SK-N-SH (cell line): ENCODE measurements at regions of chr4 and their contacts with region 1.

Region 1: DNA sequence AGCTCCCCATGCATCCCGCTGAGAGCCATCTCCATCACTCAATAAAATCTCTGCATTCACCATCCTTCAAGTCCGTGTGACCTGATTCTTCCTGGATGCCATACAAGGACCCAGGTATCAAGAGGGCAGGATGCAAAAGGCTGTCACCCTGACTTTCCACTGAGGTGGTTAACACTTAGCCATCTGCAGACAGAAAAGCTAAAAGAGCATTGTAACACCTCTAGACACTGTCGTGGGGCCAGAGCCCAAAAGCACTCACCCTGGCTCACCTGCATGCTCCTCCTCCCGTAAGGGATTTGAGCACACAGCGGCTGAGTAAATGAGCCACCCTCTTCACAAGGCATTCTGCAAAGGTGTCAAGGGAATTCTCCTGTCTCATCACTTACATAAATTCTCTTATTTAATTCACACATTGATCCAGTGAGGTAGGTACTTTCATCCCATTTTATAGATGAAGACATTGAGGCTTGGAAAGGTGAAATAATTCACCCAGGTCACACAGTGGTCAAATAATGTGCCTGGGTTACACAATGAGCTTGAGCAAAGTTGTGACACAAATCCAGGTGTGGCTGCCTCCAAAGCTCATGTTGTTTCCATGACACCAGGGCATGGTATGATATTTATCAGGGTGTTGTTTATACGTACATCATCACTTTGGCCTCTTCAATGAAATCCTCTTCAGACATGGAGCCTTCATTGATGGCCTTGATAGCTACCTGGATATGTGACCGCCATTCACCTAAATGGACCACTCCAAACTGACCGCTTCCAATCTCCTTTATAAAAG is 48.0 kb downstream of the TXK start:
- DNase-seq: no peak
- H3K4me3 ChIP-seq: no peak overlapping the region
- H3K27ac ChIP-seq: no peak overlapping the region
- H3K4me1 ChIP-seq: peaks cover 0 to 7% of the 10 kb centered on the region in 2 experiments; a peak in 1 of 4 replicates
- H3K27me3 ChIP-seq: no peaks in the 10 kb centered on the region
- CTCF ChIP-seq: no peak
- EP300 ChIP-seq: no peak
- RAD21 ChIP-seq: no peak

Region 2: GRCh38 chr4:47668810-47669408 is 417.1 kb before region 1 on chr4:
- CTCF ChIA-PET with region 1: interaction called, 11 read pairs
- POLR2A ChIA-PET with region 1: no interaction called
- DNase-seq: peak; percentile 43
- H3K4me3 ChIP-seq: no peak overlapping the region
- H3K27ac ChIP-seq: no peak overlapping the region
- H3K4me1 ChIP-seq: peaks cover 0 to 2% of the 10 kb centered on the region in 2 experiments; a peak in 1 of 4 replicates
- H3K27me3 ChIP-seq: no peaks in the 10 kb centered on the region
- CTCF ChIP-seq: peak; percentile 88
- EP300 ChIP-seq: no peak
- RAD21 ChIP-seq: peak; percentile 81

Region 3: GRCh38 chr4:48002267-48002666 is 83.7 kb before region 1 on chr4:
- CTCF ChIA-PET with region 1: interaction called, 17 read pairs
- POLR2A ChIA-PET with region 1: no interaction called
- DNase-seq: no peak
- H3K4me3 ChIP-seq: no peak overlapping the region
- H3K27ac ChIP-seq: no peak overlapping the region
- H3K4me1 ChIP-seq: no peaks in the 10 kb centered on the region
- H3K27me3 ChIP-seq: no peaks in the 10 kb centered on the region
- CTCF ChIP-seq: no peak
- EP300 ChIP-seq: no peak
- RAD21 ChIP-seq: no peak

Region 4: DNA sequence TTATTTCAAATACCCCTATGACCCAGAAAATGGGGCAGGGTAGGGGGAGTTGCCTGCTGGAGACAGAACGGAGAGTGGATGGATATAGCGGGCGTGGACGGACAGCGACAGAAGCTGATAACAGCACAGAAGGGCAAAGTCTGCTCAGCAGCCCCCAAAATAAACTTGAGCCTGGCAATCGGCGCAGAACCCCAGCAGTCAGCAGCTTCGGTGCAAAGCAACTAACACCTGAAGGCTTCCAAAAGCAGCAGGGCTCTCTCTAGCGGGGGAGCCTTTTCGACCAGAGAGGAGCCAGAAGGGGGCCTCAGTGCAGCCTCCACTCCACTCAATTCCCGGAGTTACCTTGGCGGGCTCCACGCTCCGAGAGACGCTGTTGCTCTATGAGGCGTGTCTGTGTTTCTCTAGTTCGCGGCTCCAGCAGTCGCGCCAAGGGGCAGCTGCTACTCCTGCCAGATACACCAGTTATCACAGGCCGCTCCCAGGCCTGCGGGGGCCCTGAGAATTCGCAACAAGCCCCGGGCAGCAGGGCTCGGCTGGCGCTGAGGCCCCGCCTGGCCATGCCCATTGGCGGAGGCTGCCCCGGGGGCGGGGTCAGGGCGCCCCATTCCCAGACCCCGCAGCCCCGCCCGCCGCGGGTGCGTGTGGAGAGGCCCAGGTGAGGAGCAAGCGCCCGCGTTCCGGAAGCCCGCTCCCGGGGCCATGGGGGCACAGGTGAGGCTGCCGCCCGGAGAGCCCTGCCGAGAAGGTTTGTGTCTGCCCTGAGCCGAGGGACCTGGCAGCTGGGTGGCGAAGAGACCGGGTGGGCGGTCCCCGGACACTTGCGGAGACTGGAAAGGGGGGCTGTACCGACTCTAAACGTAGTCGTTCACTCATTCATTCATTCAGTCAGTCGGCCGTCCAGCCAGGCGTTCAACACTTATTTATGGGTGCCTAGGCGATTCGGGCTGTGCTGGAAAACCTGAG is 69.6 kb before region 1 on chr4 and contains the starts of genes CNGA1 and NIPAL1:
- CTCF ChIA-PET with region 1: interaction called, 16 read pairs
- POLR2A ChIA-PET with region 1: no interaction called
- DNase-seq: peak; percentile 94
- H3K4me3 ChIP-seq: peak within 1 kb of the TSS; percentile 87 to 88
- H3K27ac ChIP-seq: peak within 1 kb of the TSS in 1 of 2 experiments; percentile 51; a peak in 3 of 4 replicates
- H3K4me1 ChIP-seq: peaks cover 0 to 10% of the 10 kb centered on the region in 2 experiments; a peak in 1 of 4 replicates
- H3K27me3 ChIP-seq: no peaks in the 10 kb centered on the region
- CTCF ChIP-seq: peak; percentile 58
- EP300 ChIP-seq: no peak
- RAD21 ChIP-seq: peak; percentile 40
- polyA plus RNA-seq, gene CNGA1: 0.23 and 0.45 TPM in 2 replicates
- polyA plus RNA-seq, gene NIPAL1: 1.8 and 2.0 TPM in 2 replicates

Region 5: GRCh38 chr4:48058284-48058962 is 27.6 kb before region 1 on chr4:
- CTCF ChIA-PET with region 1: no interaction called
- POLR2A ChIA-PET with region 1: no interaction called
- DNase-seq: no peak
- H3K4me3 ChIP-seq: no peak overlapping the region
- H3K27ac ChIP-seq: no peak overlapping the region
- H3K4me1 ChIP-seq: no peaks in the 10 kb centered on the region
- H3K27me3 ChIP-seq: no peaks in the 10 kb centered on the region
- CTCF ChIP-seq: no peak
- EP300 ChIP-seq: no peak
- RAD21 ChIP-seq: no peak

Region 6: GRCh38 chr4:48074657-48075056 is 11.4 kb before region 1 on chr4:
- CTCF ChIA-PET with region 1: interaction called, 28 read pairs
- POLR2A ChIA-PET with region 1: no interaction called
- DNase-seq: no peak
- H3K4me3 ChIP-seq: no peak overlapping the region
- H3K27ac ChIP-seq: no peak overlapping the region
- H3K4me1 ChIP-seq: no peaks in the 10 kb centered on the region; a peak in 1 of 4 replicates
- H3K27me3 ChIP-seq: no peaks in the 10 kb centered on the region
- CTCF ChIP-seq: no peak
- EP300 ChIP-seq: no peak
- RAD21 ChIP-seq: no peak

Region 7: DNA sequence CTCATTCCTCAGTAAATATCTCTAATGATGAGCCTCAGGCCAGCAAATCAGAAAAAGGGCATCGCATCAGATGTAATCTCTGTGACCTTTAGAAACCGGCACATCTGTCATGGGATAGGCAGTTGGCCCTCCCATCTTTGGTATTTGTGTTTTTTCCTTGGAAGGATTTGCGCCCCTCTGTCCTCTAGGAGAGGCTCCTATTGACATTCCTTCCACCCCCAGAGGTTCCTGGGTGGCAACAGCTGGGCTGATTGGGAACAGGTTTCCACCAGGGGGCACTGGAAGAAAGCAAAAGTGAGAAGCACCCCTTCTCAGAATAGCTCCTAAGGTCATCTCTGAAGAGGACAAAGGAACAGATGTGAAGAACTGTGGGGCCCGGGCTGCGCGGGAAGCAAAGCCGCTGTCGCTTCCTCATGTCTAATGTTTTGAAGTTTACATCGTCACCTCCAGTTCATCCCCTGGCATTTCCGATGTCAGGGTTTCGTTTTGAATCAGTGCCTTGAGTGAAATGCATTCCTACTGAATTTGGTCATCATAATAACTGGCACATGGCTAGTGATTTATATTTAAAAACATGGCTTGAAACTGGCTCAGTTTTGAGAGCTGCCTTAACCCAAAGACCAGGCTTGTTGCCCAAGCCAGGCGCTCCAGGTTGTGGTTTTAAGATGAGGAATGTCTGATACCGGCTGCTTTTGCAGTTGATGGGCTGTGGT is 41.8 kb after region 1 on chr4:
- CTCF ChIA-PET with region 1: no interaction called
- POLR2A ChIA-PET with region 1: no interaction called
- DNase-seq: peak; percentile 45
- H3K4me3 ChIP-seq: peak overlapping the region; percentile 21 to 35; a peak in 3 of 4 replicates
- H3K27ac ChIP-seq: peak overlapping the region; percentile 47 to 75
- H3K4me1 ChIP-seq: peaks cover 0 to 19% of the 10 kb centered on the region in 2 experiments; a peak in 2 of 4 replicates
- H3K27me3 ChIP-seq: no peaks in the 10 kb centered on the region
- CTCF ChIP-seq: peak; percentile 79
- EP300 ChIP-seq: peak in 1 of 2 experiments; percentile 92; a peak in 1 of 4 replicates
- RAD21 ChIP-seq: peak; percentile 66

Region 8: DNA sequence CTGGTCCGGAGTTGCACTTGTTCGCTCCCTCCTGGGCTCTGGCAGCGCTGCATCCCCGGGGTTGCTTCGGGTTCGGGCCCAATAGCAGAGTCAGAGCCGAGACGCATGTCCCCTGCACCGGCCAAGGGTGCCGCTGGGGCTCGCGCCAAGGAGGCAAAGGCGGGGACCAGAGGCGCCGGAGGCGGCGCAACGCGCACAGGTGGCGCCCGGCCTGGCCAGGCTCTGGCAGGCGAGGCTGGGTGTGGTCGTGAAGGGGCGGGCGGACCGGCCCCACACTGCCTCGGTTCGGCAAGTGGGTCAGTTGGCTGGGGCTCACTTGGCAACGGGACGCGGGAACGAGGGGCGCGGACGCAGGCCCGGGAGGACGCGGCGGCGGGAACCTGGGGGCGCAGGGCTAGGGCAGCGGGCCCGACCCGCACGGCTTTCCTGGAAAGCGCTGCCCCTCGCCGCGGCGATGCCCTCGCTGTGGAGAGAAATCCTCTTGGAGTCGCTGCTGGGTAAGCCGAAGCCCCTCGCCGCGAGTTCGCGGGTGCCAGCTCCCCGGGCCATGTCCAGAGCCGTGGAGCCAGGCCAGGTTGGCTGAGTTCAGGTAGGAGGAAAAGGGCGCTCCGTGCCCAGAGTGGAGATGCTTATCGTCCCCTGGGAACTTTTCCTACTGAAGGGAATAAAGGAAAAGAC is 900.1 kb after region 1 on chr4 and contains the start of gene CWH43:
- CTCF ChIA-PET with region 1: no interaction called
- POLR2A ChIA-PET with region 1: no interaction called
- DNase-seq: peak; percentile 22
- H3K4me3 ChIP-seq: no peak within 1 kb of the TSS
- H3K27ac ChIP-seq: no peak within 1 kb of the TSS
- H3K4me1 ChIP-seq: no peaks in the 10 kb centered on the region
- H3K27me3 ChIP-seq: peaks cover 54% of the 10 kb centered on the region
- CTCF ChIP-seq: no peak
- EP300 ChIP-seq: no peak
- RAD21 ChIP-seq: no peak
- polyA plus RNA-seq, gene CWH43: not detected in 2 replicates